ENCODE measurements at regions of chr16 and their contacts with region 1.

Region 1: DNA sequence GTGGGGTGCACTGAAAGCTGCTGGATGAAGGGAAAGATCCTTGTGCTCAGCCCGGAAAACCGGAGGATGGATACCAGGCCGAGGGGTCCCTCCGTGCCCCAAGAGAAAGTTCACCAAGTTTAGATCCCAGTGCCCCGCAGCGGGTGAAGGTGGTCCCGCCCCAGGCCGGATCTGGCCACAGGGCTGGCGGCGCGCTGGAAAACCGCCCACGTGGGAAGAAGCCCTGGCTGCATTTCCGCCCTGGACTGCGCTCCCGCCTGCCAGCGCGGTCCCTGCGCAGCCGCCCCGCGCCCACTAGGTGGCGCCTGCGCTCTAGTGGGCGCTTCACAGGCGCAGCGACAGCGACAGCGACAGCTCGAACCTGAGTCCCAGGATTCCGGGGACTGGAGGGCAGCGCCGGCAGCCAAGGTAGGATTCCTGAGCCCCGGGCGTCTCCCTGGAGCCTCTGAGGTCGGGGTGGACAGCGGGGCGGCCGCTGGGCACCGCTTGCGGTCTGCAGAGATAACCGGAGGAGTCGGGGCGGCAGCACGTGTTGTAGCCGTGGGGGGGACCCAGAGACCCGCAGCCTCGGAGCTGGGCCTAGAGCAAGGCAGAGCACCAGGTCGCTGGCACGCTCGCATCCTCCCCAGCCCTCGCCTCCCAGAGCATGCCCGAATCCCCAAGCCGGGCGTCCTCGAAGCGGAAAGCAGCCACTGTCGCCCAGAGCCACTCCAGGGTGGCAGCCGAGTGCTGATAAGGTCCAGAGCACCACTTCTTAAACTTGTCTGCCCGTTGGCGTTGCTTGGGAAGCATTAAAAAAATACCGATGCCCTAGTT is at the start of gene CHD9:
- DNase-seq: peak; percentile 88
- ATAC-seq: peak; percentile 82
- H3K4me3 ChIP-seq: peak within 1 kb of the TSS; percentile 88
- H3K27ac ChIP-seq: peak within 1 kb of the TSS; percentile 45
- H3K4me1 ChIP-seq: peaks cover 19% of the 10 kb centered on the region
- H3K27me3 ChIP-seq: no peaks in the 10 kb centered on the region
- CTCF ChIP-seq: peak; percentile 81
- total RNA-seq, gene CHD9: 13.3 and 19.5 TPM in 2 replicates

Region 2: GRCh38 chr16:52741351-52741750 is 313.5 kb before region 1 on chr16:
- CTCF ChIA-PET with region 1: no interaction called
- POLR2A ChIA-PET with region 1: no interaction called
- intact Hi-C with region 1: no loop called
- DNase-seq: no peak
- ATAC-seq: no peak
- H3K4me3 ChIP-seq: no peak overlapping the region
- H3K27ac ChIP-seq: no peak overlapping the region
- H3K4me1 ChIP-seq: no peaks in the 10 kb centered on the region
- H3K27me3 ChIP-seq: no peaks in the 10 kb centered on the region
- CTCF ChIP-seq: no peak

Region 3: DNA sequence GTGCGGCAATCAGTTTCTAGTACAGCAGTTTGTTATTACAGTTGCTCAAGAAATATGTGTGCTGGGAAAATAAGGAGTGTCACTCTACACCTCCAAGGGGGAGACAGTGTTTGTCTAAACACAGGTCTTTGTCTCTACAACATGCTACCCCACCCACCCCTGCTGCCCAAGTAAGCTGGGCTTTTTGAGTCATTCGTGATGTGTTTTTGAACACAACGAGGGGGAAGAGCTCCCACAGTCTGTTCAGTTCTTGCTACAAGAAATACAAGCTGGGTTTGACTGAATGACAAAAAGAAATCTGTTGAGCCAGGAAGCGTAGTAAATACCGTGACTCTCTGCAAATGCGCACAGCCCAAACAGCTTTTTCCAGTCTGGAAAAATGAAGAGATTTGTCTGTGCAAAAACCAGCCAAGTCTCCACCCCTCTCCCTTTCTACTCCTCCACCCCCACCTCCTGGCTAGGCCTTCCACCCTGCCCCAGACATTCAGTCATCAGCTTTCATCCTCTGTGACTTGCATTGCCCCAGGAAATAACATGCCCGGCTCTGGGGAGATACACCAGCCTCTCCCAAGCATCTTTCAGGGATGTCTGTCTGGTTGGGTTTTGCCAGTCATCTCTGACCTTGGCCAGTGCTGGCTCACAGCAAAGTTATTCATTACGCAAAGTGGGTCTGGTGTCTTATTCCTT is 25.6 kb after region 1 on chr16:
- CTCF ChIA-PET with region 1: interaction called, 4 read pairs
- POLR2A ChIA-PET with region 1: no interaction called
- intact Hi-C with region 1: loop called (anchors 2 kb)
- DNase-seq: peak; percentile 69
- ATAC-seq: peak; percentile 83
- H3K4me3 ChIP-seq: peak overlapping the region; percentile 47; the same call in 1 of the 2 replicates
- H3K27ac ChIP-seq: peak overlapping the region; percentile 72
- H3K4me1 ChIP-seq: peaks cover 19% of the 10 kb centered on the region
- H3K27me3 ChIP-seq: no peaks in the 10 kb centered on the region
- CTCF ChIP-seq: no peak

Region 4: DNA sequence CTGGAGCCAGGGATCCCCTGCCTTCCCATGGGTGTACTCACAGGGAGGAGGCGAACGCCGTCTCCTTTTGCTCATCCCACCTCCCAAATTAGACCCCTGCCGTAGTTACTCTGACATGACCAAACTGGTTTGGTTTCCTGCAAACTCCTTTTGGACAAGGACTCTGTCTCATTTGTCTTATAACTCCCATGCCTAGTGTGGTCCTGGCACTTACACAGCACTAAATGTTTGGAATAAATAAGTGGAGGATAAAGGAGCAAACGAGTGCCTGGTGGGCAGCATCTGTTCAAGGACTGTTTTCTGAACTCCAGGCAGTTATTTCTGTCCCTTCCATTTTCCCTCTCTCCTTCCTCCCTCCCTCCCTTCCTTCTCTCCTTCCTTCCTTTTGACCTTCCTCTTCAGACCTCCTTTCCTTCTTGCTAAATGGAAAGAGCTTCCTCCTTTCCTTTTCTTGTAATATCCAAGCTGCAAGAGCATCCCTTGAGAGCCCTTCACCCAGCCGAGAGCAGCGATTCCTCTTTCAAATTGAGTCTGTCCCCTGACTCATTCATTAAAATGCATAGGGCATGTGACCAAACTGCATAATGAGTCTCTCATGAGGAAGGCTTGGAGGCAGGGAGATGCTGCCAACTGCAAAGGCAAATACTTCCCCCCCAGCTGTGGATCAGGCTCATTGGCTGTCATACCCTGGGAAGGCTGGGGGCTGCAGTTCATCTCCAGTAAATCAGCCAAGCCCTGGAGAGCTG is 36.8 kb after region 1 on chr16:
- CTCF ChIA-PET with region 1: no interaction called
- POLR2A ChIA-PET with region 1: no interaction called
- intact Hi-C with region 1: no loop called
- DNase-seq: no peak
- ATAC-seq: no peak
- H3K4me3 ChIP-seq: no peak overlapping the region
- H3K27ac ChIP-seq: no peak overlapping the region
- H3K4me1 ChIP-seq: peaks cover 8% of the 10 kb centered on the region; the same call in 1 of the 2 replicates
- H3K27me3 ChIP-seq: no peaks in the 10 kb centered on the region
- CTCF ChIP-seq: no peak

Region 5: DNA sequence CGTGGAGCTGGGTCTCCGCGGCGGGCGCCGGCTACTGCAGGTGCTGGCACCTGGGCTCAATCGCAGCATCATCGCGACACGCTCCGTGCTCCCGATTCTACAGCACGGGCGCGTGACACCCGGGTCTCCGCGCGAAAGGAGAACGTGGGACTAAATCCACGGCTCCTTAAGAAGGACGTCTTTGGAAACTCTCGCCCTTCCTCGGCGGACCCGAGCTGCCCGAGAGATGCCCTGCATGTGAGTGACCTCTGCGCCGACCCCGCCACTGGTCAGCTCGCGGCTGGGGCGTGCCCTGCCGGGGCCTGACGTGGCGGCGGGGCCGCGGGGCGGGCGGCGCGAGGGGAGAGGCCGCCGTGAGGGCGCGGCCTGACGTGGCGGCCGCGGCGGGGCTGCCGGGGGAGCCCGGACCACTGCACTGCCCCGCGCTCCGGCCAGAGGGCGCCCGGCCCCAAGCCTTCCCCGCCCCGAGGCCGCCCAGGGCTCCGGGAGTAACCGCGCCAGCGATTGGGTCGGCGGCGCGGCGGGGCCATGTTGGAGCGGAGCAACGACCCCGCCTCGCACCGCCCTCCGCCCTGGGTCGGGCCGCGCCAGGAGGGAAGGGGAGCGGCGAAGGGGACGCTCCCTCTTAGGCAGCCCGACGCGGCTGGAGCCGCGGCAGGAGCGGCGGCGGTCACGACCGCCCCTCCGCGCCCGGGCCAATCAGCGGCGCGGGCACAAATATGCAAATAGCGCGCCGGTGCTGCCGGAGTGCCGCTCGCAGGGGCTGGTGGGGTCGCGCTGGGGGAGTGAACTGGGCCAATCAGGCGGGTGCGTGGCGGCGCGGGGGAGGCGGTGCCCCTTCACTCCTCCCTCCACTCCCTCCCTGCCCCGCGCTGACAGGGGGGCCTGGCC is 75.5 kb after region 1 on chr16:
- CTCF ChIA-PET with region 1: interaction called, 3 read pairs
- POLR2A ChIA-PET with region 1: no interaction called
- intact Hi-C with region 1: loop called (anchors 1 kb)
- DNase-seq: peak; percentile 83
- ATAC-seq: peak; percentile 76
- H3K4me3 ChIP-seq: peak overlapping the region; percentile 75
- H3K27ac ChIP-seq: peak overlapping the region; percentile 69
- H3K4me1 ChIP-seq: peaks cover 13% of the 10 kb centered on the region
- H3K27me3 ChIP-seq: no peaks in the 10 kb centered on the region
- CTCF ChIP-seq: peak; percentile 18; the same call in 1 of the 2 replicates

Region 6: DNA sequence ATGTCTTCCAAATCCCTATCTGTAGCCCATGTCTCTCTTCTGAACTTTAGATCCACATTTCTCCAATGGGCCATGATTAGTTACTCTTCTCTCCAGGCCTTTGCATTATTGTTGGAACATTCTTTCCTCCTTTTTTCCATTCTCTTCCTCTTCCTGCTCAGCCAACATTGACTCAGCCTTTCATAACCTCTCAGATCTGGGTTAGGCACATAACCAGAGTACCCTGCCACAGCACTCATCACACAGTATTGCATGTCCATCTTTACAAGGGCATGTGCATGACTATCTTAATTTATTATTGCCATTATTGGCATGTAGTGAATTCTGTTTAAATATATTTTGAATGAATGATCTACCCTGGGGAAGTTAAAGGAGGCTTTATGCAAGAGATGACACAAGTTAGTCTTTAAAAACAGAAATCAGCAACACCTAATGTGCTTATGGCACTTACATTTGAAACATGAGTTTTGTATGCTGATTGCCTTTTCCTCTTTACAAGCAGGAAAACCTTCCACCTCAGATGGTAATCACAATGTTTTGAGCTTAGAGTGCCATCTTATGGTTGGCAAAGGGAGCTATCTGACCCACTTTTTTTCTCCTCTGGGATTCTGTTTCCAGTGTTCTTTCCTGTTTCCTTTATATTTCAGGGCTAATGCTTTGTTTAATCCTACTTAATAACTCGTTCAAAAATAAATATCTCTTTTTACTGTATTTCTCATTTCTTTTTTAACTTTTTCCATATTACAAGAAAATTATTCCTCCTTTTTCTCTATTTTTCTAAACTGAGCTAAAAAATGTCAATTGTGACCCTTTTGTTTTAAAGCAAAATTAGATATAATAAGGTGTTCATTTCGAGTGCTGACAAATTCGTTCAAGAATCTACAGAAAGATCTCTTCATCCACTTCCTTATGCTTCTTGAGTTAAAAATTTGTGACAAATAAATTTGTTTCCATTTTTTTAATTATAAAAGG is 228.4 kb after region 1 on chr16:
- CTCF ChIA-PET with region 1: no interaction called
- POLR2A ChIA-PET with region 1: no interaction called
- intact Hi-C with region 1: loop called (anchors 10 kb)
- DNase-seq: peak; percentile 66
- ATAC-seq: peak; percentile 70
- H3K4me3 ChIP-seq: no peak overlapping the region
- H3K27ac ChIP-seq: no peak overlapping the region
- H3K4me1 ChIP-seq: no peaks in the 10 kb centered on the region
- H3K27me3 ChIP-seq: no peaks in the 10 kb centered on the region
- CTCF ChIP-seq: peak; percentile 74

Region 7: DNA sequence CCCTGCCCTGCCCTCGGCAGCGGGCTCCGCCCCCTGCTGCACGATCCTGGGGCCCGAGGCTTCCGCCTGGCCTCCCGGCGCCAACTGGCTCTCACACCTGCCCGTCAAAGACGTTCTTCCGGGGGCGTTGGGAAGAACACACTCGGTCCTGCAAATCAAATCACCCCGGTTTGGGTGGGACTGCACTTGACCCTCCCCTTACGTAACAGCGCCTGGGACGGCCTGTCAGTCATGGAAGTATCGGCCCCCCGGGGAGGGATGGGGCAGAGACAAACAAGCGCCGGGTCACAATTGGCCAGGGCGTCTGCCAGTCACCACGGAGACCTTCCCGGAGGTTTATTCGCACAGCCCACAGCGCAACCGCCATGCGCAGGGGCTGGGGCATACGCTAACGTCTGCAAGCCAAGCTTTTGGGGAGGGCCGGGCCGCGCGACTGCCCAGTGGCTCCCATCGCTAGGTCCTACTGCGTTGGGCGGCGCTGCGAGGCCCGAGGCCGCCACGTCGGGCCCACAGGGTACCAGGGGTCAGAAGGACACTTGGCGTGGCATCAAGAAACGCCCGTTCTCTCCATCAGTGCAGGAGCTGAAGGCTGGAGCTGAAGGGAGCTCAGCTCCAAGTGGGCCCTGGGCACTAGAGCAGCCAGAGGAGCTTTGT is 448.5 kb after region 1 on chr16:
- CTCF ChIA-PET with region 1: no interaction called
- POLR2A ChIA-PET with region 1: no interaction called
- intact Hi-C with region 1: loop called (anchors 10 kb)
- DNase-seq: peak; percentile 98
- ATAC-seq: peak; percentile 88
- H3K4me3 ChIP-seq: peak overlapping the region; percentile 75
- H3K27ac ChIP-seq: peak overlapping the region; percentile 30; the same call in 1 of the 2 replicates
- H3K4me1 ChIP-seq: peaks cover 22% of the 10 kb centered on the region
- H3K27me3 ChIP-seq: no peaks in the 10 kb centered on the region
- CTCF ChIP-seq: no peak

Measured in PC-3 (cell line).